Activated T-helper 1 cell treated with anti-CD3 and anti-CD28 coated beads, Interleukin-12 subunit alpha, Interleukin-12 subunit beta, Interleukin-2, Interleukin-4 antibody, amounts not matched to agents 30 ng/mL and 10 ng/mL and 1 ng/mL, durations not matched to agents 14 hours and 24 hours and 36 hours (primary cell): ENCODE measurements at regions of chr7 and their contacts with region 1.

Region 1: DNA sequence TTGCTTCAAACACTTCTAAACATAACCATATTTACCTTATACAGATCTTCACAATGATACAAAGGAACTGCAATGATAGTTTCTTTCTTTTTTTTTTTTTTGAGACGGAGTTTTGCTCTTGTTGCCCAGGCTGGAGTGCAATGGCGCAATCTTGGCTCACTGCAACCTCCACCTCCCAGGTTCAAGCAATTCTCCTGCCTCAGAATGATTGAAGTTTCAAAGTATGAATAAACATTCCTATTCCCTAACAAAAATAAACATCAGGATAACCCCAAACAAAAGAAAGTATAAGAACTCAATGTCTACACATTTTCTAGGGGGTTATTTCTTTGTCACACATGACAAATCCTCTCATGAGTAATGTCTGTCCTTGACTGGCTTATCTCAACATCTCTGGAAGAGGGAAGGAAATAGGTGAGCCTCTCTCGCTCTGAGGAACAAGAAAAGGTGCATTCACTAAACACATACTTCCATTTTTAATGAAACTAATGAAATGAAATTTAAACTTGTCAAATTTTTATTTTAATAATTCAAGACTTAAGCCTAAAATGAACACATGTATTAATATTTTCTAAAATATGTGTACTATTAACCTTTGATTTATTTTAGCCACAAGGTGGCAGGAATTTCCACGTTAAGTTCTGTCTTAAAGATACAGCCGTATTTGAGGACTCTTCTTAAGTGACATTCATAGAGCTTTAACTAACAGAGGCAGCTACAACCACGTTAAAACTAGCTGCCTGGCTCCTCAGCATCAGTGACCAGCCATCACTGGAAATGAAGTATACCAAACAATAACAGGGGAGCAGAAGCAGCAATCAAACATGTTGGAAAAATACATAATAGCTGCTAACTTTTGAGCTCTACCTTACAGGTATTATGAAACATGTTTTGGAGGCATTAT is 58.3 kb downstream of the MALSU1 start:
- DNase-seq: no peak
- H3K4me3 Mint-ChIP-seq: peak overlapping the region; percentile 49
- H3K27ac Mint-ChIP-seq: peak overlapping the region; percentile 49
- H3K4me1 Mint-ChIP-seq: peaks cover 26% of the 10 kb centered on the region
- H3K27me3 Mint-ChIP-seq: peaks cover 48% of the 10 kb centered on the region

Region 2: GRCh38 chr7:23105644-23106056 is 251.8 kb before region 1 on chr7 and contains the start of gene KLHL7:
- intact Hi-C with region 1: loop called (anchors 5 kb)
- DNase-seq: peak; percentile 95
- H3K4me3 Mint-ChIP-seq: peak within 1 kb of the TSS; percentile 94
- H3K27ac Mint-ChIP-seq: peak within 1 kb of the TSS; percentile 96
- H3K4me1 Mint-ChIP-seq: peaks cover 30% of the 10 kb centered on the region
- H3K27me3 Mint-ChIP-seq: no peaks in the 10 kb centered on the region
- total RNA-seq, gene KLHL7: 18.2 and 19.7 TPM in 2 replicates

Region 3: GRCh38 chr7:23306936-23307521 is 50.4 kb before region 1 on chr7:
- intact Hi-C with region 1: loop called (anchors 2 kb)
- DNase-seq: no peak
- H3K4me3 Mint-ChIP-seq: no peak overlapping the region
- H3K27ac Mint-ChIP-seq: no peak overlapping the region
- H3K4me1 Mint-ChIP-seq: peaks cover 46% of the 10 kb centered on the region
- H3K27me3 Mint-ChIP-seq: no peaks in the 10 kb centered on the region

Region 4: DNA sequence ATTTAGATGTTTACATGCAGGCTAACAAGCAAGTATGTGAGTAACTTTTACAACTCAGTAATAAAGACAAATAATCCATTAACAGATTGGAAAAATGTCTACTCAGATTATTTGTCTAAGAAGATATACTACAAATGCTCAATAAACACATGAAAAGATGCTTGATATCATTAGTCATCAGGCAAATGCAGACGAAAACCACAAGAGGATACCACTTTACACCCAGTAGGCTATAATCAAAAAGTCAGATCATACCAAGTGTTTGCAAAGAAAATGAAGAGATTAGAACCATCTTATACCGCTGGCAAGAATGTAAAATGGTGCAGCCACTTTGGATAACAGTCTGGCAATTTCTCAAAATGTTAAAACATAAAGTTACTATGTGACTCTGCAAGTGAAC is 25.8 kb after region 1 on chr7:
- intact Hi-C with region 1: no loop called
- DNase-seq: no peak
- H3K4me3 Mint-ChIP-seq: no peak overlapping the region
- H3K27ac Mint-ChIP-seq: no peak overlapping the region
- H3K4me1 Mint-ChIP-seq: peaks cover 12% of the 10 kb centered on the region
- H3K27me3 Mint-ChIP-seq: peaks cover 4% of the 10 kb centered on the region

Region 5: GRCh38 chr7:23404546-23405239 is 47.3 kb after region 1 on chr7:
- intact Hi-C with region 1: loop called (anchors 1 kb)
- DNase-seq: no peak
- H3K4me3 Mint-ChIP-seq: peak overlapping the region; percentile 7
- H3K27ac Mint-ChIP-seq: peak overlapping the region; percentile 82
- H3K4me1 Mint-ChIP-seq: peaks cover 14% of the 10 kb centered on the region
- H3K27me3 Mint-ChIP-seq: no peaks in the 10 kb centered on the region

Region 6: DNA sequence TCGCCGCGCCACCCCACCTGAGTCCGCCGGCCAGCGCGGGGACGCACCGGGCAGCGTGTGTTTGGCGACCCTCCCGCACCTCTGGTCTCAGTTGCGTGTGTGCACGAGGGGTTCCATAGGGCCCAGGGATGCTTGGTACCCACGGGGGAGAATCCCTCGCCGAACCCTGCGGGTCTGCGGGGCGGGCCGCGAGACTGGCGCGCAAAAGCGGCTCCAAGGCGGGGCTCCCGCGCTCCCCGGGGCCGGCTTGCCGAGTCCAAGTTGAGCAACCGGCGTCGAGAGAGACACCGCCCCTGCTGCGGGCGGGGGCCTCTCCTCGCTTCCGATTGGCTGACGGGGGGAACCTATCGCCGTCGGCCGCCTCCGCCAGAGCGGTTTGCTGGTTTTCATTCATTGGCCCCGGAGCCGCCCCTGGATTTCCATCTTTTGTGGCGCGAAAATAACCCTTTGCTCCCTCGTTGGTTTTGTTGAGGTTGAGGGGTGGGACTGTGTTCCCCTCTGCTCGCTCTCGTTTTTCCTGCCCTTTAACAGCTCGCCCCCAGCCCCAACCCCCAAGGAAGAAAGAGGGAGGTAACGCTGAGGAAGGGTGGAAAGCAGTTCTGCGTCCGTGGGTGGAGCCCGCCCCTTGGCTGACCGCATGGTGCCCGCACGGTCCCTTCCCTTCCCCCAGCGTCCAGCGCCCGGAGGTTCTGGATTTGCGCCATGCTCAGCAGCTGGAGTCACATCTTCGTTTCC is 116.8 kb after region 1 on chr7:
- intact Hi-C with region 1: loop called (anchors 1 kb)
- DNase-seq: peak; percentile 89
- H3K4me3 Mint-ChIP-seq: peak overlapping the region; percentile 83
- H3K27ac Mint-ChIP-seq: peak overlapping the region; percentile 57
- H3K4me1 Mint-ChIP-seq: peaks cover 39% of the 10 kb centered on the region
- H3K27me3 Mint-ChIP-seq: peaks cover 63% of the 10 kb centered on the region

Region 7: DNA sequence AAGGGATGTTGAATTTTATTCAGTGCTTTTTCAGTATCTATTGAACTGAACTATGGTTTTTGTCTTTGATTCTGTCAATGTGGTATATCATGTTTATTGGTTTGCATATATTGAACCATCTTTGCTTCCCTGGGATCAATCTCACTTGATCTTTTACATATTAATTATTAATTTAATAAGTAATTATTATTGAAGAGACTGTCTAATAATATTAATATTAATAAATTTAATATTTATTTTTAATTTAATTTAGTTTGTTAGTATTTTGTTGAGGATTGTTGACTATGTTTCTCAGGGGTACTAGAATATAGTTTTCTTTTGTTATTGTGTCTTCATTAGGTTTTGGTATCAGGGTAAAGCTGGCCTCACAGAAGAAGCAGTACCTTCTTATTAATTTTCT is 200.9 kb after region 1 on chr7:
- intact Hi-C with region 1: no loop called
- DNase-seq: no peak
- H3K4me3 Mint-ChIP-seq: no peak overlapping the region
- H3K27ac Mint-ChIP-seq: no peak overlapping the region
- H3K4me1 Mint-ChIP-seq: no peaks in the 10 kb centered on the region
- H3K27me3 Mint-ChIP-seq: peaks cover 12% of the 10 kb centered on the region